ENCODE measurements at regions of chr15 and their contacts with region 1.

Region 1: GRCh38 chr15:48855501-48856440 is 22.2 kb upstream of the EID1 start:
- DNase-seq: peak; percentile 55
- H3K4me3 Mint-ChIP-seq: no peak overlapping the region
- H3K27ac Mint-ChIP-seq: peak overlapping the region; percentile 1
- H3K4me1 Mint-ChIP-seq: peaks cover 21% of the 10 kb centered on the region
- H3K27me3 Mint-ChIP-seq: no peaks in the 10 kb centered on the region
- CTCF ChIP-seq: peak; percentile 53

Region 2: GRCh38 chr15:48810414-48811317 is 45.1 kb before region 1 on chr15 and contains the start of gene CEP152:
- CTCF ChIA-PET with region 1: interaction called, 5 read pairs
- POLR2A ChIA-PET with region 1: interaction called, 8 read pairs
- intact Hi-C with region 1: loop called (anchors 5 kb)
- DNase-seq: peak; percentile 100
- H3K4me3 Mint-ChIP-seq: peak within 1 kb of the TSS; percentile 90
- H3K27ac Mint-ChIP-seq: peak within 1 kb of the TSS; percentile 90
- H3K4me1 Mint-ChIP-seq: peaks cover 37% of the 10 kb centered on the region
- H3K27me3 Mint-ChIP-seq: no peaks in the 10 kb centered on the region
- CTCF ChIP-seq: no peak
- total RNA-seq, gene CEP152: 6.4 and 6.5 TPM in 2 replicates

Measured in MCF 10A (cell line).